PC-3 (cell line): ENCODE measurements at regions of chr1 and their contacts with region 1.

Region 1: GRCh38 chr1:202599677-202600431 is 110.4 kb downstream of the SYT2 start:
- DNase-seq: peak; percentile 63
- ATAC-seq: peak; percentile 99
- H3K4me3 ChIP-seq: no peak overlapping the region
- H3K27ac ChIP-seq: no peak overlapping the region
- H3K4me1 ChIP-seq: no peaks in the 10 kb centered on the region
- H3K27me3 ChIP-seq: no peaks in the 10 kb centered on the region
- CTCF ChIP-seq: peak; percentile 79

Region 2: GRCh38 chr1:202348509-202349205 is 251.2 kb before region 1 on chr1 and contains the start of gene PPP1R12B:
- CTCF ChIA-PET with region 1: no interaction called
- POLR2A ChIA-PET with region 1: no interaction called
- intact Hi-C with region 1: loop called (anchors 10 kb)
- DNase-seq: peak; percentile 96
- ATAC-seq: peak; percentile 97
- H3K4me3 ChIP-seq: peak within 1 kb of the TSS; percentile 98
- H3K27ac ChIP-seq: peak within 1 kb of the TSS; percentile 34
- H3K4me1 ChIP-seq: 0 out of 2 replicates have a peak, but pooled peaks cover 9% of the 10 kb centered on the region
- H3K27me3 ChIP-seq: no peaks in the 10 kb centered on the region
- CTCF ChIP-seq: no peak
- total RNA-seq, gene PPP1R12B: 2.0 and 6.6 TPM in 2 replicates

Region 3: DNA sequence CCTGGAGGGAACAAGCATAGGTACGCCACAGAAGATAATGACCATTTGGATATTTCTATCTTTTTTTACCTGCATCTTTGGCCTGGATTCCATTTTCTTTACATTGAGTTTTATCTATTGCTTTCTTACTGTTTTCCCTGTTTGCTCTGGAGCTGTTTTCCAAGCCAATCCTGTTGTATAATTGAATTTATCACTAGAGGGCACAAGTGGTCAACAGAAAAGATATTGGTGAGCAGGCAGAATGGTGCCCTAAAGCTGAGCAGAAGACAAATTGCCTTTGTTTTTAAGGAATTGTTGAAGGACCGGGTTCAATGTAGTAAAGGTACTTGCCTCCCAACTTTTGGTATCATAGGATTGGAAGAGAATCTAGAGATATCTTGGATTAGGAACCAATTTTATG is 98.6 kb before region 1 on chr1:
- CTCF ChIA-PET with region 1: interaction called, 6 read pairs
- POLR2A ChIA-PET with region 1: no interaction called
- intact Hi-C with region 1: loop called (anchors 1 kb)
- DNase-seq: peak; percentile 52
- ATAC-seq: no peak; the same call in 1 of the 2 replicates
- H3K4me3 ChIP-seq: no peak overlapping the region
- H3K27ac ChIP-seq: no peak overlapping the region
- H3K4me1 ChIP-seq: no peaks in the 10 kb centered on the region
- H3K27me3 ChIP-seq: no peaks in the 10 kb centered on the region
- CTCF ChIP-seq: peak; percentile 47; the same call in 1 of the 2 replicates

Region 4: DNA sequence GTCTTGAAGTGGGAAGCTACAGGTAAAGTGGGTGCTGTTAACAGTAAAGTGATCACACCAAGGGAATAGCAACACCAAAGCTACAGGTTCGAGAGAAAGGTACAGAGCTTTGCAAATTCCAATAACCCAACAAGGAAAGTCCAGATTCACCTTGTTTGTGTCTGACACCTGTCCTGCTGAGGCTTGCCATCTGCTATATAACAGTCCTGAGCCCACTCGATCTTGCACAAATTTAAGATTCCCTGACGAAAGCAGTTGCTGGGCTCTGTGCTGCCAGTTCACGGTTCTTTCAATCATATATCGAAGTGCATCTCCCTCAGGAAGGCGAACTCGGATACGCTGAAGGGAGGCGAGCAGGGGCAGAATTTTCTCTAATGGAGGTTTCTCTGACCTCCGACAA is 133.4 kb after region 1 on chr1:
- CTCF ChIA-PET with region 1: no interaction called
- POLR2A ChIA-PET with region 1: no interaction called
- intact Hi-C with region 1: no loop called
- DNase-seq: no peak
- ATAC-seq: no peak
- H3K4me3 ChIP-seq: no peak overlapping the region
- H3K27ac ChIP-seq: no peak overlapping the region
- H3K4me1 ChIP-seq: no peaks in the 10 kb centered on the region
- H3K27me3 ChIP-seq: no peaks in the 10 kb centered on the region
- CTCF ChIP-seq: no peak